ENCODE measurements at regions of chr4 and their contacts with region 1.

Region 1: DNA sequence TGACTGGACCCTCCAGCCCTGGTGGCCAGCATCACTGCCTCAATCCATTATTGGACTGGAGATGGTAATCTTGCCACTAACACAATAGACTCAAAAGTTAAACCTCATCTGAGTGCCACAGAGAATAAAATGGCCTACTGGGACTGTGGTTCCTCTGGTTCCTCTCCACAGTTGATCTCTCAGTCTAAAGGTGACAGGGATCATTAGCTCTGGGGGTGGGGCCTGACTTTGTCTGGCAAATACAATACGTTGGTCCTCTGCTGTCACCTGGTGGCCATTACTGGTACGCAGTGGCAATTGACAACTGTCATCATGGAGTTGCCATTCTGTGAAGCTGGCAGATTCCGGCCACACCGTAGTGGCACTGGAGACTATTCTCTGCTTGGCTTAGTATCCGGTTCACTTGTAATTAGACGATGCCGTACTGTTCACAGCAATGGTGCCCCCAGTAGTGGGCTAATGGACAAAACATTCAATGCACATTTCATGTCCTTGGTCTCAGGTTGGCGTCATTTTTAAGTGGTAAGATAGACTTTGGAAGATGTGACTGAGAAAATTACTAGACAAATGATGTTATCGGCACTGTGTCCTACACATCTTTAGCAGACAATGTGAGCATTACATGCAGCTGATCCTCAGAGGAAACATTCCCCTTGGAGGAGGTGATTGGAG is 6.7 kb downstream of the FGFBP2 start:
- DNase-seq: peak; percentile 57 to 75 (median 65)
- H3K4me3 ChIP-seq: no peak overlapping the region
- H3K4me3 Mint-ChIP-seq: no peak overlapping the region
- H3K27ac ChIP-seq: no peak overlapping the region
- H3K27ac Mint-ChIP-seq: no peak overlapping the region
- H3K4me1 ChIP-seq: no peaks in the 10 kb centered on the region
- H3K4me1 Mint-ChIP-seq: peaks cover 0 to 5% (median 3%) of the 10 kb centered on the region in 4 donors
- H3K27me3 ChIP-seq: no peaks in the 10 kb centered on the region
- H3K27me3 Mint-ChIP-seq: peaks cover 6 to 8% of the 10 kb centered on the region in 2 donors

Region 2: DNA sequence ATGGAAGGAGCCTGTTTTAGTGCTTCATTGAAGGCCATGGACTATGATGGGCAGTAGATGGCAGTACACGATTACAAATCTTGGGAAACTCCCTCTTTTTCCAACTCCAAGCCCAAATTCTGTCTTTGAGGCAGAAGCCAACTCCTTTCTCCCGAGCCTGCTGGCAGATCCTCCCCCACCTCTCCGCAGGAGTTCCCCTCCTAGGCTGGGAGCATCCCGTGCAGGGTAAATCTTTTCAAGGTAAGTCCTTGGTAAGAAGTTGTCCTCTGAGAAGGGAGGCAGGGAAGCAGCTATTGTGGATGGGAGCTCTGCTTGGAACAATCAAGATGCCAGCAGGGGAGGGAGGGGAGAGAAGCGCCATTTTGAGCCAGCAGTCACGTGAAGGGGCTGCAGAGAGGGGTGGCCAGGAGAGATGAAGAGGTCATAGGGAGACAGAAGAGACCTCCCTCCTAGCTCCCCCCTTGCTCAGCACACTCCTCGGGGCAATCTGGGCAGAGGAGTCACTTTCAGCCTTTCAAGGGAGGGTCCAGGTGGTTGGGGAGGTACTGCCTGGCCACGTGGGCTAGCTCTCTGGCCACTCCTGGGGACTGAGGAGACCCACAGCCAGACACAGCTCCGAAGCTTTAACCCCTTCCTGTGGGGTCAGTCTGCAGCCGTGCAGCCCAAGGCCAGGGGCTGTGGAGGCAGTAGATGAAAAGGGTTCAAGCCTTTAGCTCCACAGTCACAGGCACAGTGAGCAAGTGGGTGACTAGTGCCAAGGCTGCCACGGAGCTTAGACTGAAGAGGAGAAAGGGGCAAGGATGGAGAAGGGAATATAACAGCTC is 477.0 kb before region 1 on chr4:
- CTCF ChIA-PET with region 1: interaction called, 3 read pairs
- POLR2A ChIA-PET with region 1: no interaction called
- intact Hi-C with region 1: loop called (anchors 2 kb)
- DNase-seq: peak in 2 of 5 donors; percentile 6 to 11
- H3K4me3 ChIP-seq: no peak overlapping the region
- H3K4me3 Mint-ChIP-seq: no peak overlapping the region
- H3K27ac ChIP-seq: no peak overlapping the region
- H3K27ac Mint-ChIP-seq: no peak overlapping the region
- H3K4me1 ChIP-seq: no peaks in the 10 kb centered on the region
- H3K4me1 Mint-ChIP-seq: no peaks in the 10 kb centered on the region
- H3K27me3 ChIP-seq: no peaks in the 10 kb centered on the region
- H3K27me3 Mint-ChIP-seq: no peaks in the 10 kb centered on the region

Region 3: GRCh38 chr4:15729910-15730533 is 226.3 kb before region 1 on chr4:
- CTCF ChIA-PET with region 1: interaction called, 21 read pairs
- POLR2A ChIA-PET with region 1: no interaction called
- intact Hi-C with region 1: no loop called
- DNase-seq: peak in 4 of 5 donors; percentile 46 to 60 (median 54)
- H3K4me3 ChIP-seq: no peak overlapping the region
- H3K4me3 Mint-ChIP-seq: no peak overlapping the region
- H3K27ac ChIP-seq: no peak overlapping the region
- H3K27ac Mint-ChIP-seq: no peak overlapping the region
- H3K4me1 ChIP-seq: peaks cover 3% of the 10 kb centered on the region
- H3K4me1 Mint-ChIP-seq: peaks cover 4 to 11% (median 8%) of the 10 kb centered on the region in 4 donors
- H3K27me3 ChIP-seq: no peaks in the 10 kb centered on the region
- H3K27me3 Mint-ChIP-seq: peaks cover 1 to 2% of the 10 kb centered on the region in 2 donors

Region 4: DNA sequence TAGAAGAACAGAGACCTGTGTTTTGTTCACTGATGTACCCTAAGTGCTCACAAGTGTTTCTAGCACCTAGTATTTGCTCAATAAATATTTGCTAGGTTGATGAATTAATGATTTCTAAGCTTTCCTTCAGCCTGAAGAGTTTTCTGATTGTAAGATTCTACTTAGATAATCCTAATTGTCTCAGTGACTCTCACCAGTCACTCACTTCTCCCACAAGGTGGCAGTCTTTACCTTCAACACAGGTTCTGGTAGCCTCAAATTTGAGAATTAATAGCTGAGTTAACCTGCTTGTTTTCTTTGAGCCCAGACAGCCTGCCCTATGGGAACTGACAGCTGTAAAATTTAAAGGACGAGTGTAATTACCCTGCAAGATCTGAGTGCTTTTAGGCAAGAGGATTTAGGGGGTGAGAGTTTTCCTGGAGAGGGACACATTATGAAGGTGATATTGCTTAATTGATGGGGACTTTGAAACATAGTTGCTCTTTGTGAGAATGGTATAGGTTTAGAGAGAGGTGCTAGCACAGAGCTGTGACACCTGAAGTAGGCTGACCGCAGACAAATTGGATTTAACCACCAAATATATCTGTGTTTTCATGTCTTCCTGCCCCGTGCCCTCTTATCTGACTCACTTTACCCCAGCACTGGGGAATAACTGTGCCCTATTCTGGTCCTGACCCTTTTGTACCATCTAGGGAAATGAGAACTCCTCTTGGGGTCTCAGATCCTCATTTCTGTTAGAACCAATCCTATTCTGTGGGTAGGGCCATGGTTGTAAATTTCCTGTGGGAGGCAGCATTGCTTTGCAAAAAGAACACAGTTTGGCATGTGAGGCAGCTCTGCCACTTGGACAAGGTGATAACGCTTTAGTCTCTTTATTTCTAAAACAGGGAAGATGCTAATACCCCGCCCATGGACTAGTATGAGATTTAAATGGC is 150.5 kb before region 1 on chr4:
- CTCF ChIA-PET with region 1: interaction called, 30 read pairs
- POLR2A ChIA-PET with region 1: no interaction called
- intact Hi-C with region 1: loop called (anchors 1 kb)
- DNase-seq: peak in 4 of 5 donors; percentile 43 to 53 (median 50)
- H3K4me3 ChIP-seq: no peak overlapping the region
- H3K4me3 Mint-ChIP-seq: no peak overlapping the region
- H3K27ac ChIP-seq: no peak overlapping the region
- H3K27ac Mint-ChIP-seq: no peak overlapping the region
- H3K4me1 ChIP-seq: peaks cover 7% of the 10 kb centered on the region
- H3K4me1 Mint-ChIP-seq: peaks cover 9 to 11% (median 9%) of the 10 kb centered on the region in 4 donors
- H3K27me3 ChIP-seq: no peaks in the 10 kb centered on the region
- H3K27me3 Mint-ChIP-seq: peaks cover 0 to 3% of the 10 kb centered on the region in 2 donors

Region 5: DNA sequence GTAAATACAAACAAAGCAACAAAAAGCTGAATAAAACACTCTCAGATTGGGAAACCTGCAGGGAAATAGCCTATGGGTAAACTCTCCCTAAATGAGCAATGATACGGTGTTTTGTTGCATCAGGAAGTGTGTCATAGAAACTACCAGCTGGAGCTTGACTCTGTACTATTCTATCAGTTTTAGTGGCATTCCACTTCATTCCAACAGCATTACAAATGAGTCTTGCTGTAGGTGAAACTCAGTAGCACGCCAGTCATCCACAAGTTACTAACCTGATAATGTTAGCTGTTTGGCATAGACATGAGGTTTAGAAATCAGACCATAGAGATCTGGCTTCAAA is 42.7 kb before region 1 on chr4:
- CTCF ChIA-PET with region 1: no interaction called
- POLR2A ChIA-PET with region 1: no interaction called
- intact Hi-C with region 1: no loop called
- DNase-seq: no peak
- H3K4me3 ChIP-seq: no peak overlapping the region
- H3K4me3 Mint-ChIP-seq: no peak overlapping the region
- H3K27ac ChIP-seq: no peak overlapping the region
- H3K27ac Mint-ChIP-seq: no peak overlapping the region
- H3K4me1 ChIP-seq: no peaks in the 10 kb centered on the region
- H3K4me1 Mint-ChIP-seq: no peaks in the 10 kb centered on the region
- H3K27me3 ChIP-seq: no peaks in the 10 kb centered on the region
- H3K27me3 Mint-ChIP-seq: peaks cover 5 to 20% of the 10 kb centered on the region in 2 donors